Mucosa of descending colon (tissue), 3 donors: ENCODE measurements at regions of chr1 and their contacts with region 1.

Region 1: DNA sequence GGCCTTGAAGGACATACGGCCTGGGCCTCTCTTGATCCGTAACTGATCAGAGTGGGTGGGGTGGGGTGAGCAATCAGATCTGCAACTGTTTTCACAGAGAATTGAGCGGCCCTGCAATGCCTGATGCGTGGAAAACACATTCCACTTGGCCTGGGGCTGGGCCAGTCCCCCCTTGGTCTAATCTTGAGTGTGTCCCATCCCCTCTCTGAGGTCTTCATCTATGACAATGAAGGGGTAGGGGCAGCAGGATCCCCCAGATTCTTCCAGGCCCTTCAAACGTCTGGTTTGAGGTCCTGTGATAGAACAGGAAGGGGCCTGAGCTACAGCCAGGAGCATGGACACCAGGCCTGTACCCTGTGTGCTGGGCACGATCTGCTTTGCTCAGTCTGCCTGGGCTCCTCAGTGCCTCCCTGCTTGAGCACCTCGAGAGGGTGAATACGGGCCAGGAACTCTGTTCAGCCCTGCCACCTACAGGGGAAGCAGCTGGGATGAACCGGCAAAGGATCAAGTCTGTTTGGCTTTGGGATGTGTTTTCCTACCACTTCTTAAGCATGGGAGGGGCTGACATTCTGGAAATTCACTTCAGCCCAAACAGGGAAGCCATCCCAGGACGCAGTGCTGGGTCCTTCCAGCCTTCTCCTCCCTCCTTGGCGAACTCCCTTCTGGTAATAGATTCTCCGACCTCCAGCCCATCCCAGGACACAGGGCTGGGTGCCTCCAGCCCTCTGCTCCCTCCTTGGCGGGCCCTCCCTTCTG is 56.0 kb upstream of the SELENON start:
- DNase-seq: peak; percentile 59 to 70 (median 66)
- ATAC-seq: peak; percentile 80
- H3K4me3 ChIP-seq: no peak overlapping the region
- H3K4me1 ChIP-seq: peaks cover 6% of the 10 kb centered on the region
- CTCF ChIP-seq: peak; percentile 14

Region 2: DNA sequence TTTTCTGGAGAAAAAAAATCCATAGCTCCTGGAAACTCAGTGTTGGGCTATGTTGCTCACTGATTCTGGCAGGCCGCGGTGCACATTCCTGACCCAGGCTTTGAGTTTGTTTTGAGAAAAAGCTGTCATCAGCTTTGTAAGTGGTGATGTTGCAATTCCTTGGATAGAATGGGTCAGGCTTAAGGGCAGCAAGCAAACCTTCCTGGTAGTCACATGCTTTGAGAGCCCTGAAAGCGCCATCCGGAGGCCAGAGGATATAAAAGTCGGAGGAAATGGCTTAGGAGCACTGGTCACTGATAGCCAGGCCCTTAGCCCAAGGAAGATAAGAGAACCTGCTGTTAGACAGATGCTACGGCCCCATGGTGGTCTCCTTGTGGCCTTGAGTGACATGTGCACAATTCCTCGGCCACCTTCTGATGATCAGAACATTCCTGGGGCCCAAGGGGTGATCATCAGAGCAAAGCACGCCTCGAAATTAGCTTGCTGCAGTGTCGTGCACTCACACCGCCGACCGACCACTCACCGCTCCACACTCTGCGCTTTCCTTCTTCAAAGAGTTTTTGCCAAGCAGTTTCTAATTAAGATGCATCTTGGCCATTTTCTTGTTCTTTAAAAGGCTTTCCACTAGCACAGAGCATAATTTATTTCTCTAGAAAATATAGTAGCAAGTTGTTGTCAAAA is 48.8 kb before region 1 on chr1:
- intact Hi-C with region 1: loop called in 1 of 2 experiments (anchors 10 kb)
- DNase-seq: peak; percentile 49 to 74 (median 56)
- ATAC-seq: peak; percentile 71
- H3K4me3 ChIP-seq: no peak overlapping the region
- H3K4me1 ChIP-seq: no peaks in the 10 kb centered on the region
- CTCF ChIP-seq: no peak